AG04450 (cell line): ENCODE measurements at regions of chr15 and their contacts with region 1.

Region 1: DNA sequence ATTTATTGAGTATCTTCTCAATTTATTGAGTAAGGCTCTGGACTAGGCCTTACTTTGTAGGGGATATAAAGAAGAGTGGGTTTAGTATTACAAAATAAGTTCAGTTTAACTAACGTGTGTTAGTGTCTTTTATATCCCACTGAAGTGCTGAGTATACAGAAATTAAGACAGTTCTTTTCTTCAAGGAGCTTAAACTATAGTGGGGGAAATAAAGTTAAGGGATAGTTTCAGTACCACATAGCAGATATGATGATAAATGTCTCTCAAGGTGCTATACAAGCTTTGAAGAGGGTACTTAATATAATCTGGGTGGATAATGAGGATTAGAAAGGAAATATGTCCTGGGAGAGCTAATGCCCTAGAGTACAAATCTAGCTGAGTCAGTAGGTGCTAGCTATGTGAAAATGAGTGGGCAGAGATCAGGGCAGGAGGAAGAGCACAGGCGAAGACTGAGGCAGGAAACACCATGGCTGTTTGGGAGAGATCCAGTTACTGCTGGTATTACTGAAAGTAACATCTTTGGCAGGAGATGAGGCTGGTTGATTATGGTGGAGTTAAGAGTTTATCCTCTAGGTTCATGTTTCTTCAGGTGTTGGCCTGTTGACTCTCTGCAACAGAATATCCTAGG is 46.0 kb downstream of the TEX9 start:
- DNase-seq: no peak
- H3K4me3 ChIP-seq: no peak overlapping the region
- H3K27ac ChIP-seq: no peak overlapping the region
- H3K27me3 ChIP-seq: no peaks in the 10 kb centered on the region
- CTCF ChIP-seq: no peak

Region 2: GRCh38 chr15:56207092-56207491 is 204.1 kb before region 1 on chr15:
- CTCF ChIA-PET with region 1: no interaction called
- POLR2A ChIA-PET with region 1: interaction called, 10 read pairs
- DNase-seq: no peak
- H3K4me3 ChIP-seq: no peak overlapping the region
- H3K27ac ChIP-seq: no peak overlapping the region
- H3K27me3 ChIP-seq: no peaks in the 10 kb centered on the region
- CTCF ChIP-seq: no peak

Region 3: GRCh38 chr15:57031605-57032004 is 620.4 kb after region 1 on chr15:
- CTCF ChIA-PET with region 1: no interaction called
- POLR2A ChIA-PET with region 1: no interaction called
- DNase-seq: no peak
- H3K4me3 ChIP-seq: no peak overlapping the region
- H3K27ac ChIP-seq: no peak overlapping the region
- H3K27me3 ChIP-seq: no peaks in the 10 kb centered on the region
- CTCF ChIP-seq: no peak